Transverse colon (tissue), 4 donors: ENCODE measurements at regions of chr1 and their contacts with region 1.

Region 1: GRCh38 chr1:54255026-54255702 is 55.2 kb downstream of the MRPL37 start:
- DNase-seq: no peak
- H3K4me3 ChIP-seq: no peak overlapping the region
- H3K27ac ChIP-seq: no peak overlapping the region
- H3K4me1 ChIP-seq: peaks cover 0 to 27% (median 7%) of the 10 kb centered on the region in 4 donors
- H3K27me3 ChIP-seq: no peaks in the 10 kb centered on the region
- CTCF ChIP-seq: no peak
- EP300 ChIP-seq: no peak
- POLR2A ChIP-seq: no peak

Region 2: DNA sequence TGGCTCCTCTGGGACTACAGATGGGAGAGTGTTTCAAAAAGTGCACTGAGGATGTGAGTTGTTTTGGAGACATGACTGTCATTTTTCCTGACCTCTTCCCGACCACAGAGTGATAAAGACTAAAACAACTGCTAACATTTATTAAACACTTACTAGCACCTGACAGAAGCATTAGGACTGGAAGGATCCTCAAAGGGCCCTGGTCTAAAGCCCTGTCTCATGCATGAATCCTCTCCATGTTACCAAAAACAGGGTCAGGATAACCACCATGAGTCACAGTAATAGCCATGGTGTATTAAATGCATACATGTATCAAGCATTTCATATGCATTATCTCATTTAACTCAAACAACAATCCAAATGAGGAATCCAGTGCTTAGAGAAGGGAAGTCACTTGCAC is 66.9 kb before region 1 on chr1:
- in situ Hi-C with region 1: no loop called
- intact Hi-C with region 1: no loop called
- DNase-seq: no peak
- H3K4me3 ChIP-seq: no peak overlapping the region
- H3K27ac ChIP-seq: no peak overlapping the region
- H3K4me1 ChIP-seq: no peaks in the 10 kb centered on the region
- H3K27me3 ChIP-seq: no peaks in the 10 kb centered on the region
- CTCF ChIP-seq: no peak
- EP300 ChIP-seq: no peak
- POLR2A ChIP-seq: no peak

Region 3: GRCh38 chr1:54212872-54213271 is 42.3 kb before region 1 on chr1:
- in situ Hi-C with region 1: no loop called
- intact Hi-C with region 1: no loop called
- DNase-seq: no peak
- H3K4me3 ChIP-seq: no peak overlapping the region
- H3K27ac ChIP-seq: no peak overlapping the region
- H3K4me1 ChIP-seq: no peaks in the 10 kb centered on the region
- H3K27me3 ChIP-seq: no peaks in the 10 kb centered on the region
- CTCF ChIP-seq: no peak
- EP300 ChIP-seq: no peak
- POLR2A ChIP-seq: no peak

Region 4: DNA sequence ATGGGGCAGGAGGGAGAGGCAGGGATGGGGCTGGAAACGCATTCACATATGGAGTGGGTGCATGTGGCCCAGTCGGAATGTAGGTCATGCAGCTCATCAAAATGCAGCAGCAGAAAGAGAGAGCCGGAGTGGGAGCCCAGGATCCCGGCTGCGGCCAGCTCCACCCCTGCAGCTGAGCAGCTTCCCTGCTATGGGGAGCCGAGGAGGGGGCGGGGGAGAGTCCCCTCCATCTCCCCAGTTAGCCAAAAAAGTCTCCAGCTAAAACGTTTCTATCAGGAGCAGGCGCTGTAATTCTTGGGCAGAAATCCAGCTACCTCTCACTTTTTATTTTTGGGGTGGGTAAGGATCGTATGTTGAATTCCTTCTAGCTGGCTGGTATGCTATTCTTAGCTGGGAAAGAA is 15.5 kb before region 1 on chr1:
- in situ Hi-C with region 1: no loop called
- intact Hi-C with region 1: loop called (anchors 1 kb)
- DNase-seq: no peak
- H3K4me3 ChIP-seq: no peak overlapping the region
- H3K27ac ChIP-seq: no peak overlapping the region
- H3K4me1 ChIP-seq: no peaks in the 10 kb centered on the region
- H3K27me3 ChIP-seq: no peaks in the 10 kb centered on the region
- CTCF ChIP-seq: no peak
- EP300 ChIP-seq: no peak
- POLR2A ChIP-seq: no peak

Region 5: DNA sequence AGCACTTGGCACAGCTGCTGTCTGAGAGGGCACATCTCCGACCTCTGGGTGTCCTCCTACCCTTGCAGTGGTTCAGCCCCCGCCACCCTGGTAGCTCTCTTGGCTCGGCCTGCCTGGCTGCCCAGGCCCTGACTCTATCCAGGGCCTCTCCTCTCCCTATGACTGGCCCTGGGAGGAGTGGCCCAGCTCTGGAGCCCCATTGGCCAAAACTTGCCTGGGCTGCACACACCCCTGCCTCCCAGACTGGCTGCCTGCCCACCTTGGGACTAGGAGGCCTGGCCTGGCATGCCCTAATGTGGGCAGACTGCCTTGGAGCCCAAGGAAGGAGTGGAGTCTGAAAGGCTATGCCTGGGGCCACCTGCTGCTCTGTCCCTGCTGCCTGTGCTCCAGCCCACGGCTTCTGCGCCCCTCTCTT is 326.5 kb after region 1 on chr1:
- in situ Hi-C with region 1: no loop called
- intact Hi-C with region 1: loop called (anchors 5 kb)
- DNase-seq: peak; percentile 89
- H3K4me3 ChIP-seq: no peak overlapping the region
- H3K27ac ChIP-seq: peak overlapping the region; percentile 64 to 87 (median 73)
- H3K4me1 ChIP-seq: peaks cover 16 to 38% (median 19%) of the 10 kb centered on the region in 4 donors
- H3K27me3 ChIP-seq: no peaks in the 10 kb centered on the region
- CTCF ChIP-seq: peak in 1 of 5 experiments; percentile 17
- EP300 ChIP-seq: peak; percentile 6
- POLR2A ChIP-seq: peak; percentile 36

Region 6: GRCh38 chr1:54685335-54685905 is 430.3 kb after region 1 on chr1:
- in situ Hi-C with region 1: no loop called
- intact Hi-C with region 1: no loop called
- DNase-seq: no peak
- H3K4me3 ChIP-seq: no peak overlapping the region
- H3K27ac ChIP-seq: no peak overlapping the region
- H3K4me1 ChIP-seq: no peaks in the 10 kb centered on the region
- H3K27me3 ChIP-seq: no peaks in the 10 kb centered on the region
- CTCF ChIP-seq: no peak
- EP300 ChIP-seq: no peak
- POLR2A ChIP-seq: no peak